ENCODE measurements at regions of chr17 and their contacts with region 1.

Region 1: GRCh38 chr17:10618202-10618635 is 38.9 kb downstream of the MYH3 start:
- DNase-seq: peak; percentile 70
- H3K4me3 Mint-ChIP-seq: no peak overlapping the region
- H3K27ac Mint-ChIP-seq: no peak overlapping the region
- H3K4me1 Mint-ChIP-seq: no peaks in the 10 kb centered on the region
- H3K27me3 Mint-ChIP-seq: peaks cover 3% of the 10 kb centered on the region

Region 2: DNA sequence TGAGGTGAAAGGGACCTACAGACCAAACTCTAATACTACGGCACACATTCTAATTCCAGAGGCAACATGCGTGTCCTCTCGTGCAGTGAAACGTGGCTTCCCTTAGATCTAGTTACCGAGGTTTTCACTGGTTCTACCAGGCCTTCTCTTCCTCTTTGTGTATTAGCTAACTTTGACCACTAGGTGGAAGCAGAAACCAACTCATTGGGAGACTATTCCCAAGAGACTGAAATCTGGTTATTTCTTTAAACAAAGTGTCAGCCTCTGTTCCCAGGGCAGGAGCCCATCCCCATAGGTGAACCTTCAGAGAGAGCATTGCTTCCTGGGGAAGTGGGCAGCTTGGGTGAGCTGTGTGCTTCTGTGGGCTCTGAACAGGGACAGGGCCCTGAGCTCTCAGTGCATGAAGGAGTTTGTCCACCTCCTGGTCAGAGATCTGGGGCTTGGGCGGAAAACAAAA is 693.5 kb before region 1 on chr17:
- CTCF ChIA-PET with region 1: interaction called, 20 read pairs
- POLR2A ChIA-PET with region 1: no interaction called
- intact Hi-C with region 1: loop called (anchors 10 kb)
- DNase-seq: no peak
- H3K4me3 Mint-ChIP-seq: no peak overlapping the region
- H3K27ac Mint-ChIP-seq: no peak overlapping the region
- H3K4me1 Mint-ChIP-seq: no peaks in the 10 kb centered on the region
- H3K27me3 Mint-ChIP-seq: no peaks in the 10 kb centered on the region

Region 3: DNA sequence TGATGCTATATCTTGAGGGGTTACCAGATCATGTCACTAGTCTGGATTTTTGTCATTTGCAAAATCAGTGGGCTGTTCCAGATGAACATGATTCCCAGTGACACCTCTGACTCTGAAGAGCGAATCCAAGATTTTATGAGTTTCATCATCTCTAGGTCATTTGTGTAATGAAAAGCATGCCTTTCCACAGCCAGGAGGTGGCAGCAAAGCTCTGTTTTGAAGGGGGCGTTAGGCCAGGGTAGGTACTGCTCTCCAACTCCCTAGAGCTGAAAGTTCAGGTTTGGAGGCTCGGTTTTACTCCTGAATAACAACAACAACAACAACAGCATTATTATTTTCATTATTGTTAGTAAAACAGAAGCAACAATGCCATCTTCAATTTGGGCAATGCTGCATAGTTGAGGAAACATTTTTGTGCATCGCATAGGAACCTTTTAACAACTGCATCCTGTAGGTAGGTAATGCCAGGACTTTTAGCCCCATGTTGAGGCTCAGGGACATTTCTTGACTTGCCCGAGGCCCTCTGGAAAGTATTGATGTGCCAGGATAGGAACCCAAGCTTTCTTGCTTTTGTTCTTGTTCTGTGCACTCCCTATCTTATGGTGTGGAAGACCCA is 322.4 kb before region 1 on chr17:
- CTCF ChIA-PET with region 1: interaction called, 6 read pairs
- POLR2A ChIA-PET with region 1: no interaction called
- intact Hi-C with region 1: loop called (anchors 10 kb)
- DNase-seq: peak; percentile 46
- H3K4me3 Mint-ChIP-seq: no peak overlapping the region
- H3K27ac Mint-ChIP-seq: no peak overlapping the region
- H3K4me1 Mint-ChIP-seq: no peaks in the 10 kb centered on the region
- H3K27me3 Mint-ChIP-seq: peaks cover 5% of the 10 kb centered on the region

Region 4: GRCh38 chr17:10327640-10328039 is 290.6 kb before region 1 on chr17:
- CTCF ChIA-PET with region 1: interaction called, 76 read pairs
- POLR2A ChIA-PET with region 1: no interaction called
- intact Hi-C with region 1: loop called (anchors 1 kb)
- DNase-seq: peak; percentile 80
- H3K4me3 Mint-ChIP-seq: no peak overlapping the region
- H3K27ac Mint-ChIP-seq: no peak overlapping the region
- H3K4me1 Mint-ChIP-seq: no peaks in the 10 kb centered on the region
- H3K27me3 Mint-ChIP-seq: no peaks in the 10 kb centered on the region

Region 5: DNA sequence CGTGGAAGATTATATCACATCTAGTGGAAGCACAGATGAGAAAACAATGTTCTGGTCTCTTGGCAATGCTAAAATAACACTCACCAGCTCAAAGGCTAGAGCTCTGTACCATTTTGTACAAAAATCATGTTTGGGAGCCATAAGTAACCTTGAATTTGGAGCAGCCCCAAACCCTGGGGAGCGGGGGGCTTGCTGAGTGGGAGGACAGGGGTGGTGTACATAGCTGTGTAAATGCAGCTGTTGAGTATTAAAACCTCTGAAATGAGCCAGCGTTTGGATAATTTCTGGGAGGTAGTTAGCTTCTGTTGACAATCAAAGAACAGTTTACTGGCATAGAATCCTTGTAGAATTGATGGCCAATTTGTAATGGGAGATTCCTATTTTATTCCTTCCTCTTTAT is 200.8 kb before region 1 on chr17:
- CTCF ChIA-PET with region 1: no interaction called
- POLR2A ChIA-PET with region 1: no interaction called
- intact Hi-C with region 1: no loop called
- DNase-seq: no peak
- H3K4me3 Mint-ChIP-seq: no peak overlapping the region
- H3K27ac Mint-ChIP-seq: no peak overlapping the region
- H3K4me1 Mint-ChIP-seq: no peaks in the 10 kb centered on the region
- H3K27me3 Mint-ChIP-seq: peaks cover 1% of the 10 kb centered on the region

Region 6: GRCh38 chr17:10600571-10600970 is 17.6 kb before region 1 on chr17:
- CTCF ChIA-PET with region 1: interaction called, 37 read pairs
- POLR2A ChIA-PET with region 1: no interaction called
- intact Hi-C with region 1: no loop called
- DNase-seq: no peak
- H3K4me3 Mint-ChIP-seq: no peak overlapping the region
- H3K27ac Mint-ChIP-seq: no peak overlapping the region
- H3K4me1 Mint-ChIP-seq: no peaks in the 10 kb centered on the region
- H3K27me3 Mint-ChIP-seq: peaks cover 6% of the 10 kb centered on the region

Region 7: DNA sequence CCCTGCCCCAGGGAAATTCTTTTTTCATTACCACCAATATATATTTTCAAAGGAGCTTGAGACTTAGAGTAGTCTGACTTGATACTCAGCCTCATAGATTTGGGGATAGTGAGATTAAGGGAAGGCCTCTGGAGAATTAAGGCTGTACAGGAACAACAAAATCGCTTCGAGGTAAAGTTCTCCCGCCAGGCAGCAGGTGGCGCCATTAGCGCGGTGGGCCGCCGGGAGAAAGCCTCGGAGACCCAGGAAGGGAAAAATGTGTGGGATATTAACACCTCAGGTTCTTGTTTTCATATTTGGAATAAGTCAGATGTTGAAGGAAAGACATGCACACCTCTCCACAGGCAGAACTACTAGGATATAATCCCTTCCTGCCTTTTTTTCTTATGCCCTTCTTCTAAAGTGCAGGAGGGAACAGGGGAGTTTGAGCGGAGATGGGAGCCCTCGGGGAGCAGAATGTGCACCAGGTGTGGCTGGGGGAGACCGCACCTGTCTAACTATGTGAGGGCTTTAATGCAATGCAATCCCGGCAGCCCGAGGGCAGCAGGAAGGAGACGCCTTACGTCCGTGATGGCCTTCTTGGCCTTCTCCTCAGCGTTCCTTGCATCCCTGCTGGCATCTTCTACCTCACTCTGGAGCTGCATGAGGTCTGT is 13.0 kb after region 1 on chr17:
- CTCF ChIA-PET with region 1: interaction called, 136 read pairs
- POLR2A ChIA-PET with region 1: no interaction called
- intact Hi-C with region 1: no loop called
- DNase-seq: peak; percentile 38
- H3K4me3 Mint-ChIP-seq: no peak overlapping the region
- H3K27ac Mint-ChIP-seq: no peak overlapping the region
- H3K4me1 Mint-ChIP-seq: peaks cover 7% of the 10 kb centered on the region
- H3K27me3 Mint-ChIP-seq: no peaks in the 10 kb centered on the region